Gastrocnemius medialis (tissue), 4 donors: ENCODE measurements at regions of chr12 and their contacts with region 1.

Region 1: DNA sequence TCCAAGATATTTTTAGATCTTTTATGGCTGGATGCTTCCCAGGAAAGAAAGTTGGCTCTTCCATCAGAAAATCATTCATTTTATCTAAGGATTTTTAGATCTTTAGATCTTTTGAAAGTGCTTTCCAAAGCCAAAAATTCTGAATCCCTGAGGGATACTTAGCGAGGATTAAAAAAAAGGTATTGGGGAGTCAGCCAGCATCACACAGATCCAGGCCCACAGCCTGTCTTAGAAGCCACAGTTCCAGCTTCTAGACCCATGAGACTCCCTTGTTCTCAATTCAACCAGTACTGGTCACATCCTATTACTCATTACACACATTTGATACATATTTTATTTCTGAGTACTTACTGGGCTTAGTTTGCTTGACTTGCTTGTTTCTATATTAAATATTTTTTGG is 49.9 kb downstream of the TSPAN8 start:
- DNase-seq: peak; percentile 6 to 19
- ATAC-seq: peak; percentile 83 to 89
- H3K4me3 ChIP-seq: no peak overlapping the region
- H3K27ac ChIP-seq: no peak overlapping the region
- H3K4me1 ChIP-seq: no peaks in the 10 kb centered on the region
- H3K27me3 ChIP-seq: no peaks in the 10 kb centered on the region
- CTCF ChIP-seq: no peak
- POLR2A ChIP-seq: no peak

Region 2: DNA sequence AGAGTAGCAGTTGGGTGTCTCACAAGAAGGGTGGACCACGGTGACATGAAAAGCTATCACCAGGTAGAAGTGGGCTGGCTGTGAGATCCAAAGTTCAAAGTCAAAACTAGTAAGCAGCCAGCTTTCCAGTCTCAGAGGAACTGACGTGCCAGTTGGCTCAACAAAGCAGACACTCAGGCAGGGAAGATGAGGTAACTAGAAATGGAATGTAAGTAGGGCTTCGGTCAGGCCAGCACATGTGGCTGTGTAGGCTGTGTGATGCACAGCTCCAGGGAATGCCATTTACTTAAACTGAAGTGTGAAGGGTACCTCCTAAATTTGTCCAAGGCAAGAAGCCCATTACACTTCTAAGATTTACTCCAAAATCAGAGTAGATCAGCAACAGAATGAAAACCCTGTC is 231.0 kb before region 1 on chr12:
- in situ Hi-C with region 1: no loop called
- intact Hi-C with region 1: no loop called
- DNase-seq: no peak
- ATAC-seq: no peak
- H3K4me3 ChIP-seq: no peak overlapping the region
- H3K27ac ChIP-seq: no peak overlapping the region
- H3K4me1 ChIP-seq: no peaks in the 10 kb centered on the region
- H3K27me3 ChIP-seq: no peaks in the 10 kb centered on the region
- CTCF ChIP-seq: no peak
- POLR2A ChIP-seq: no peak

Region 3: DNA sequence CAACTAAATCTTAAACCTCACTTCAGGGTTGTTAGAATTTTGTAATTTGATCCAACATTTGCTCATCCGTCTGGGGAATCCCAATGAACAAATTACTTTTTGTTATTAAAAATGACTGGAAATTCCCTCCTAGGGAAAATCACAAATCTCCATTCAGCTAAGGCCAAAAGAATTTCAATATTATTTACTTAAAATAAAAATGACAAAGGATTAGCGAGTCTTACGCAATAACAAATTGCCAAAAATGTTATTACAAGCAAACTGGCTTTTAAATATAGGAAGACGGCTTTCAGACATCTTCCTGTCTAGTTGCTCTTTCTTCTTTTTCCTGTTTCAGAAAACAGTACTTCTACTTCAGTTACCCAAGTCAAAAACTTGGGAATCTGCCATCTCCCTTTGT is 142.2 kb after region 1 on chr12:
- in situ Hi-C with region 1: loop called in 1 of 4 experiments (anchors 25 kb)
- intact Hi-C with region 1: no loop called
- DNase-seq: no peak
- ATAC-seq: no peak
- H3K4me3 ChIP-seq: no peak overlapping the region
- H3K27ac ChIP-seq: no peak overlapping the region
- H3K4me1 ChIP-seq: no peaks in the 10 kb centered on the region
- H3K27me3 ChIP-seq: no peaks in the 10 kb centered on the region
- CTCF ChIP-seq: no peak
- POLR2A ChIP-seq: no peak